Heart right ventricle (tissue), 16 donors: ENCODE measurements at regions of chr6 and their contacts with region 1.

Region 1: GRCh38 chr6:46862381-46862780 is 59.4 kb downstream of the ADGRF5 start:
- DNase-seq: no peak
- ATAC-seq: no peak
- H3K4me3 ChIP-seq: no peak overlapping the region
- H3K27ac ChIP-seq: no peak overlapping the region
- H3K4me1 ChIP-seq: no peaks in the 10 kb centered on the region
- H3K27me3 ChIP-seq: no peaks in the 10 kb centered on the region
- CTCF ChIP-seq: no peak

Region 2: DNA sequence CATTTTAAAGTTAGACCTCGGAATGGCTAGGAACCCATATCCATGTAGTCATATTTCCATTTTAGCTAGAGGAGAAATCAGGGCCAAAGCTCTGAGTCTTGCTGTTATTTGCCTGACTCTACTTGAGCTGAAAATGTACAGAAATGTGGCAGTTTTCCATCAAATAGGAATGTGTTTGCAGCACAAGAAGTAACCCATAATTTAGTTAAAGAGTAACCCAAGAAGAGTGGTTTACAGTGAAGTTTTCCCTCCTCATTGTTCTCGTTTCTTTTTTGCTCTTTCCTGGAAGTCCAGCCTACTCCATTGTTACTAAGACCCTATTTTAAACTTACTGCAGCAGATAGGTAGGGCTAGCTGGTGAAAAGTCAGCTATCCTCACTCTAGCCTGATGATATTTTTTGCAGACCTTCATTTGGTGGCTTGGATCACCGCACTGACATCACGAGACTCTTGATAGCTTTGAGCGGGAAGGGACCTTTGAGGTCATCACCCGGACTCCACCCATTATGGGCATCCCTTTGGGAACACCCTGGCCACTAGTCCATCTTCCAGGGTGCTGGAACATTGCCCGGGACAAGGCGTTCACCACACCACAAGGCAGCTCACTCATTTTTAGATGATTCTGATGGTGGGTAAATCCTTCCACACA is 87.4 kb after region 1 on chr6:
- intact Hi-C with region 1: no loop called
- DNase-seq: peak; percentile 71 to 86
- ATAC-seq: peak; percentile 65 to 90 (median 79)
- H3K4me3 ChIP-seq: peak overlapping the region in 2 of 10 donors; percentile 11 to 17
- H3K27ac ChIP-seq: peak overlapping the region; percentile 11 to 88 (median 80)
- H3K4me1 ChIP-seq: peaks cover 3 to 73% (median 35%) of the 10 kb centered on the region in 9 donors
- H3K27me3 ChIP-seq: peaks cover 0 to 4% (median 0%) of the 10 kb centered on the region in 7 donors
- CTCF ChIP-seq: no peak

Region 3: GRCh38 chr6:46972531-46972930 is 110.2 kb after region 1 on chr6:
- intact Hi-C with region 1: loop called in 1 of 10 experiments (anchors 10 kb)
- DNase-seq: no peak
- ATAC-seq: no peak
- H3K4me3 ChIP-seq: no peak overlapping the region
- H3K27ac ChIP-seq: no peak overlapping the region
- H3K4me1 ChIP-seq: no peaks in the 10 kb centered on the region
- H3K27me3 ChIP-seq: no peaks in the 10 kb centered on the region
- CTCF ChIP-seq: no peak